HepG2 (cell line): ENCODE measurements at regions of chr4 and their contacts with region 1.

Region 1: DNA sequence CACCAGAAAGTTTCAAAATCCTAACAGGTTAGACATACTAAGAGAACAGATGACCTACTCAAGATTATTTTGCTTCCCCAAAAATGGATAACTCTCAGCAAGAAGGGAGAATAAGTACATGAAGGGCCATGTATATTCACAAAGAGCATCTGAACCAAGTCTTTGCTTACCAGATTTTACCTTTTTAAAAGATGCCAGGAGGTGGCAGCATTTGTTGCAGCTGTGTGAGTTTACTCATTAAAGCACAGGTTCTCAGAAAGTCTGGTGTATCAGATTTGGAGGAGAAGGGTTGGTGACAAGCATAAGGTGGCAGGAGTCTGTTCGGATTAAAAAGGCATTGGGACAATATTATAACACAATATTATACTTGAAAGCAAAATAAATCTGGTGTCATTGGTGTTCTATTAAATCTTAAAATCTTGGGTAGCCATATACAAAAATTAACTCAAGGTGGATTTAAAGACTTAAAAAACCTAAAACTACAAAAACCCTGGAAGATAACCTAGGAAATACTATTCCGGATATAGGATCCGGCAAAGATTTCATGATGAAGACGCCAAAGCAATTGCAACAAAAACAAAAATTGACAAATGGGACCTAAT is 51.3 kb upstream of the NFKB1 start:
- DNase-seq: peak; percentile 65
- ATAC-seq: peak; percentile 81
- H3K4me3 ChIP-seq: no peak overlapping the region
- H3K27ac ChIP-seq: no peak overlapping the region
- H3K4me1 ChIP-seq: peaks cover 3% of the 10 kb centered on the region
- H3K27me3 ChIP-seq: no peaks in the 10 kb centered on the region; a peak in 1 of 5 replicates
- CTCF ChIP-seq: peak; percentile 82
- EP300 ChIP-seq: no peak
- POLR2A ChIP-seq: no peak
- RAD21 ChIP-seq: peak; percentile 64

Region 2: DNA sequence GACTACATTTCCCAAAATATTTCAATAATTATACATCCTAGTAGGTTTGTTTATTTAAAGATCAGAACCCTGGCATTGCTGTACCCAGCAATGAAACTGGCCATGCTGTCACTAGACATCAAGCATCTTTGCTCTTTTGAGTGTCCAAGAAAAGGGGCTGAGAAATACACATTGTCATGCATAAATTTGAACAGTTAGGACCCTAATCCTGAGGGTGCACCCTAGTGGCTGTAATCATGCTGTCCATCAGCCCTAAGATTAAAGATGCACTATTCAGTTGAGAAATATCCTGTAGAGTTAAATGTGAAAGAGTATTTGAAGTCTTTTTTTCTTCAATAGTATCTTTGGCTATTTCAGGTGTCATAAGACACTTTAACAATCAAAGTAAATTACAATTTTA is 160.2 kb after region 1 on chr4:
- CTCF ChIA-PET with region 1: interaction called, 4 read pairs
- POLR2A ChIA-PET with region 1: no interaction called
- in situ Hi-C with region 1: loop called (anchors 10 kb)
- intact Hi-C with region 1: no loop called
- DNase-seq: no peak
- ATAC-seq: peak; percentile 58
- H3K4me3 ChIP-seq: no peak overlapping the region
- H3K27ac ChIP-seq: no peak overlapping the region
- H3K4me1 ChIP-seq: no peaks in the 10 kb centered on the region
- H3K27me3 ChIP-seq: no peaks in the 10 kb centered on the region
- CTCF ChIP-seq: peak; percentile 31; the same call in 1 of the 2 replicates
- EP300 ChIP-seq: no peak
- POLR2A ChIP-seq: no peak
- RAD21 ChIP-seq: no peak

Region 3: DNA sequence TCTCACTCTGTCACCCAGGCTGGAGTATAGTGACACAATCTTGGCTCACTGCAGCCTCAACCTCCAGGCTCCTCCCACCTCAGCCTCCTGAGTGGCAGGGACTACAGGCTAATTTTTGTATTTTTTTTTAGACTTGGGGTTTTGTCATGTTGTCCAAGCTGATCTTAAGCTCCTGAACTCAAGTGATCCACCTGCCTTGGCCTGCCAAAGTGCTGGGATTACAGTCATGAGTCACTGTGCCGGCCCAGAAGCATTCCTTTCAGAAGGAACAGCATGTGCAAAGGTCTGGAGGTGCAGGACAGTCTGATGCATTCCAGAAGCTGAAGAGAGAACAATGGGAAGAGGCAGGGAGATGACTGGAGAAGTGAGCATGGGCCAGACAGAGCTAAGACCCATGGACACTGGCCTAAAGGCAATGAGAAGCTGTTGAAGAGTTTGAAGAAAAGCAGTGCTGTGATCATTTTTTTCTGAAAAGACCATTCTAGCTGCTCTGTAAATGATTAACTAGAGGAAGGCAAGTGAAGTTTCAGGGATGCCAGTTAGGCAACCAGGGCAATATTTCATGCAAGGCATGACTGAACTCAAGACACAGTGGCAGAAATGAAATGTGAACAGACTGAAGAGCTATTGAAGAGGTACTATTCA is 267.7 kb after region 1 on chr4:
- CTCF ChIA-PET with region 1: no interaction called
- POLR2A ChIA-PET with region 1: no interaction called
- in situ Hi-C with region 1: no loop called
- intact Hi-C with region 1: loop called (anchors 10 kb)
- DNase-seq: peak; percentile 73
- ATAC-seq: peak; percentile 85
- H3K4me3 ChIP-seq: no peak overlapping the region
- H3K27ac ChIP-seq: peak overlapping the region; percentile 23
- H3K4me1 ChIP-seq: peaks cover 57% of the 10 kb centered on the region
- H3K27me3 ChIP-seq: no peaks in the 10 kb centered on the region
- CTCF ChIP-seq: no peak
- EP300 ChIP-seq: no peak
- POLR2A ChIP-seq: no peak
- RAD21 ChIP-seq: no peak

Region 4: DNA sequence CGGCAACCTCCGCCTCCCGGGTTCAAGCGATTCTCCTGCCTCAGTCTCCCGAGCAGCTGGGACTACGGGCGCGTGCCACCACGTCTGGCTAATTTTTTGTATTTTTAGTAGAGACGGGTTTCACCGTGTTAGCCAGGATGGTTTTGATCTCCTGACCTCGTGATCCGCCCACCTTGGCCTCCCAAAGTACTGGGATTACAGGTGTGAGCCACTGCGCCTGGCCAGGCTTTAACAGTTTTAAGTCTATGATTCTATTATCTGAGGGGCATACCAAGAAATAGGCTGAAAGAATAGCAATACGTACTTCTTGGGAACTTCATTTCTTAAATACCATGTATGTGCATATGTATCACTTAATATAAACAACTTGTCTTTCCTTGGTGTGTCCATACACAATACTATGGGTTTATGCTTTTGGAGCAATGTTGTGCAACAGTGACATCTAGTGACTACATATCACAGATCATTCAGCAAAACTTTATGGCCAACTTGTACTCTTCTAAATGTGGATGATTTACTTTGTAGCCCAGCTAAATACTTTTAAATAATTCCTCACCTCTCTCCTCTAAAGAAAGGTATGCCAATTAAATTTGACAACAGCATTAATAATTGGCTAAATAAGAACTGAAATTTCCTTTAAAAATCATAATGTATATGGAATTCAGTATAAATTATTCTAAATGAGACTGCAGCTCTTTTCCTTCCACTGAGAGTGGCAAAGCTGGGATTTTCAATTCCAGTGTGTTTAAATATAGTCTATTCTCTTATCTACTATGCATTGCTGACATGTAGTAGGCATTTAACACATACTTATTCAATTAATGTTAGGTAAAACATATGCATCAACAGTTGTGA is 559.2 kb after region 1 on chr4:
- CTCF ChIA-PET with region 1: interaction called, 8 read pairs
- POLR2A ChIA-PET with region 1: no interaction called
- in situ Hi-C with region 1: no loop called
- intact Hi-C with region 1: loop called (anchors 1 kb)
- DNase-seq: peak; percentile 72
- ATAC-seq: peak; percentile 94
- H3K4me3 ChIP-seq: no peak overlapping the region
- H3K27ac ChIP-seq: no peak overlapping the region
- H3K4me1 ChIP-seq: peaks cover 13% of the 10 kb centered on the region; the same call in 1 of the 2 replicates
- H3K27me3 ChIP-seq: no peaks in the 10 kb centered on the region
- CTCF ChIP-seq: peak; percentile 90
- EP300 ChIP-seq: no peak
- POLR2A ChIP-seq: no peak
- RAD21 ChIP-seq: peak; percentile 68